Naive thymus-derived CD4-positive, alpha-beta T cell (primary cell): ENCODE measurements at regions of chr17 and their contacts with region 1.

Region 1: GRCh38 chr17:7014261-7014994 is 2.0 kb downstream of the RNASEK start:
- DNase-seq: peak; percentile 96 to 98 (median 97)
- ATAC-seq: peak; percentile 89
- H3K4me3 ChIP-seq: peak overlapping the region; percentile 97
- H3K4me3 Mint-ChIP-seq: peak overlapping the region; percentile 85 to 99 (median 97)
- H3K27ac ChIP-seq: peak overlapping the region; percentile 99
- H3K27ac Mint-ChIP-seq: peak overlapping the region; percentile 97 to 100 (median 100)
- H3K4me1 ChIP-seq: peaks cover 31 to 52% of the 10 kb centered on the region in 2 donors
- H3K4me1 Mint-ChIP-seq: peaks cover 30 to 81% (median 63%) of the 10 kb centered on the region in 7 donors
- H3K27me3 ChIP-seq: no peaks in the 10 kb centered on the region
- H3K27me3 Mint-ChIP-seq: no peaks in the 10 kb centered on the region

Region 2: DNA sequence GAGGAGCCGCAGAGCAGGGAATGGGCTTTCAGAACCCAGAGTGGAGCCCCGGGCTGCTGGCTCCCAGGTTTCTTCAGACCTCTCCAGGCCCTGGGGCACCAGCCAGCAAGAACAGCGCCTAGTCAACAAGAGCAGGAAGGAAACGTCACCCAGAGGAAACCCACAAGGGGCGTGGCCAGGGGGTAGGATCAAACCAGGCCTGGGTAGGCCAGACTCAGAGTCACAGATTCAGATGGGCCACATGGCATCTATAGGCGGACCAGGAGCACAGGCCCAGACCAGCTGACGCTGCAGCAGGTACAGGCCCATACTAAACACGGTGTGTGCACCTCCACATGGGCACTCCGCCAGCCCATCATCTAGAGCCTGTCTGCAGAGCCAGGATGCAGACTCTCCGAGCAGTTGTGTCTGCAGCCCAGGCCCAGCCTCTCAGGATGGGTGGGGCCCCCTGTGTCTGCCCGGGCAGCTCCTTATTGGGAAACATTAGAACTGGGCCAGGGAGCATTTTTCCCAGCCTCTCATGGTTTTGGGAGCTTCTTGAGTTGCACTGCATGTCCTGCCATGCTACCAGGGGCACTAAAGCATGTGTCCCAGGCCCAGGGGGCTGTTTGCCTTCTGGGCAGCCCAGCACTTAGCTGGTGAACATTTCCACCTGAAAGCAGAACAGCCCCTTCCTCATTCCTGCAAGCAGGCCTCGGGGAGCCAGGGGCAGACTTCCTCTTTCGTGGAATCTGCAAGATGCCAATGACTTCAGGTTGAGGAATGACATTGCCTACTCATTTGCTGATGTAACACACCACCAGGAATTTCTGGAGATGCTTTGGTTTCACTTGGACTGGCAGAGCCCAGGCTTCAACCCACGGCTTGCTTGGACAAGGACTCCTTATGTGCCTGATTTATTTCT is 1429.8 kb before region 1 on chr17 and contains the start of gene NLRP1:
- CTCF ChIA-PET with region 1: no interaction called
- POLR2A ChIA-PET with region 1: interaction called, 3 read pairs
- intact Hi-C with region 1: loop called in 1 of 2 experiments (anchors 5 kb)
- DNase-seq: peak; percentile 78 to 97 (median 95)
- ATAC-seq: peak; percentile 96
- H3K4me3 ChIP-seq: peak within 1 kb of the TSS; percentile 97
- H3K4me3 Mint-ChIP-seq: peak within 1 kb of the TSS; percentile 94 to 100 (median 98)
- H3K27ac ChIP-seq: peak within 1 kb of the TSS; percentile 94
- H3K27ac Mint-ChIP-seq: peak within 1 kb of the TSS; percentile 90 to 100 (median 99)
- H3K4me1 ChIP-seq: peaks cover 44 to 67% of the 10 kb centered on the region in 2 donors
- H3K4me1 Mint-ChIP-seq: peaks cover 43 to 74% (median 63%) of the 10 kb centered on the region in 7 donors
- H3K27me3 ChIP-seq: no peaks in the 10 kb centered on the region
- H3K27me3 Mint-ChIP-seq: peaks cover 0 to 12% (median 0%) of the 10 kb centered on the region in 5 donors
- total RNA-seq, gene NLRP1: 86.6 to 360 (median 259) TPM

Region 3: GRCh38 chr17:6753006-6753445 is 261.4 kb before region 1 on chr17:
- CTCF ChIA-PET with region 1: no interaction called
- POLR2A ChIA-PET with region 1: no interaction called
- intact Hi-C with region 1: loop called (anchors 5 to 10 kb)
- DNase-seq: peak in 6 of 9 donors; percentile 4 to 53 (median 36)
- ATAC-seq: no peak
- H3K4me3 ChIP-seq: no peak overlapping the region
- H3K4me3 Mint-ChIP-seq: peak overlapping the region; percentile 13 to 66 (median 44)
- H3K27ac ChIP-seq: peak overlapping the region; percentile 26
- H3K27ac Mint-ChIP-seq: peak overlapping the region; percentile 24 to 100 (median 86)
- H3K4me1 ChIP-seq: peaks cover 26 to 30% of the 10 kb centered on the region in 2 donors
- H3K4me1 Mint-ChIP-seq: peaks cover 37 to 60% (median 48%) of the 10 kb centered on the region in 7 donors
- H3K27me3 ChIP-seq: no peaks in the 10 kb centered on the region
- H3K27me3 Mint-ChIP-seq: peaks cover 0 to 18% (median 0%) of the 10 kb centered on the region in 5 donors

Region 4: DNA sequence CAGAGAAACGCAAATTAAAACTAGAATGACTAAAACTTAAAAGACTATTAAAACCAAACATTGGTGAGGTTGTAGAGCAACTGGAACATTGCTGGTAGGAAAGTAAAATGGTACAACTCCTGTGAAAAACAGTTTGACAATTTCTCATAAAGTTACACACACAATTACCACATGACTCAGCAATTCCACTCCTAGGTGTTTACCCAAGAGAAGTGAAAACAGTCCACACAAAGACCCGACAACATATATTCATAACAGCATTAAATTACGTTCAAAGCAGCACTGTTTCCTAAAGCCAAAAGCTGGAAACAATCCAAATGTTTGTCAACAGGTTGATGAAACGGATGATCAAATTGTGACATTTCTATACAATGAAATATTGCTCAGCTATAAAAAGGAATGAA is 45.1 kb before region 1 on chr17:
- CTCF ChIA-PET with region 1: no interaction called
- POLR2A ChIA-PET with region 1: no interaction called
- intact Hi-C with region 1: no loop called
- DNase-seq: no peak
- ATAC-seq: no peak
- H3K4me3 ChIP-seq: no peak overlapping the region
- H3K4me3 Mint-ChIP-seq: no peak overlapping the region
- H3K27ac ChIP-seq: no peak overlapping the region
- H3K27ac Mint-ChIP-seq: peak overlapping the region in 1 of 9 donors; percentile 36
- H3K4me1 ChIP-seq: no peaks in the 10 kb centered on the region
- H3K4me1 Mint-ChIP-seq: peaks cover 0 to 5% (median 0%) of the 10 kb centered on the region in 7 donors
- H3K27me3 ChIP-seq: no peaks in the 10 kb centered on the region
- H3K27me3 Mint-ChIP-seq: peaks cover 0 to 8% (median 0%) of the 10 kb centered on the region in 5 donors

Region 5: DNA sequence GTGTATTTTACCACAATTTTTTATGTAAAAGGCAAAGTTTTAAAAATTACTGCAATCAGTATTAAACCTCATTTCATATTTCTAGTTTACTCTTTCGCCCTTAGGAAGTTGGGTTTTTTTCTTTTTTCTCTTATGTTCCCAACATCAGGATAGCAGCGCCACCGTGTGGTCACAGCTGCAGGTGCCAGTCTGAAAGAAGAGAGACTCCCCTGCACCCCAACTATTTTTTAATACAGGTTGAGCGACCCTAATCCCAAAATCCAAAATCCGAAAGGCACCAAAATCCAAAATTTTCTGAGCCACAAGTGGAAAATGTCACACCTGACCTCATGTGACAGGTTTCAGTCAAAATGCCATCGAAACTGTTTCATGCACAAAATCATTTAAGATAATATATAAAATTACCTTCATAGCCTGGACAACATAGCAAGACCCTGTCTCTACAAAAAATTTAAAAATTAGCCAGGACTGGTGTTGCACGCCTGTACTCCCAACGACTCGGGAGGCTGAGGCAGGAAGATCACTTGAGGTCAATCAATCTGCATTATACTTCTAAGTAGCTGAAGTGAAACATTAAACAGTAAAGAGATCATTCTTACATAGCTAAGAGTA is 121.9 kb after region 1 on chr17:
- CTCF ChIA-PET with region 1: interaction called, 3 read pairs
- POLR2A ChIA-PET with region 1: interaction called, 4 read pairs
- intact Hi-C with region 1: loop called in 1 of 2 experiments (anchors 1 kb)
- DNase-seq: peak; percentile 53 to 74 (median 71)
- ATAC-seq: peak; percentile 24
- H3K4me3 ChIP-seq: no peak overlapping the region
- H3K4me3 Mint-ChIP-seq: peak overlapping the region in 4 of 10 donors; percentile 32 to 53 (median 44)
- H3K27ac ChIP-seq: no peak overlapping the region
- H3K27ac Mint-ChIP-seq: peak overlapping the region in 4 of 9 donors; percentile 8 to 48 (median 28)
- H3K4me1 ChIP-seq: peaks cover 6 to 20% of the 10 kb centered on the region in 2 donors
- H3K4me1 Mint-ChIP-seq: peaks cover 13 to 34% (median 23%) of the 10 kb centered on the region in 7 donors
- H3K27me3 ChIP-seq: no peaks in the 10 kb centered on the region
- H3K27me3 Mint-ChIP-seq: peaks cover 0 to 24% (median 6%) of the 10 kb centered on the region in 5 donors

Region 6: DNA sequence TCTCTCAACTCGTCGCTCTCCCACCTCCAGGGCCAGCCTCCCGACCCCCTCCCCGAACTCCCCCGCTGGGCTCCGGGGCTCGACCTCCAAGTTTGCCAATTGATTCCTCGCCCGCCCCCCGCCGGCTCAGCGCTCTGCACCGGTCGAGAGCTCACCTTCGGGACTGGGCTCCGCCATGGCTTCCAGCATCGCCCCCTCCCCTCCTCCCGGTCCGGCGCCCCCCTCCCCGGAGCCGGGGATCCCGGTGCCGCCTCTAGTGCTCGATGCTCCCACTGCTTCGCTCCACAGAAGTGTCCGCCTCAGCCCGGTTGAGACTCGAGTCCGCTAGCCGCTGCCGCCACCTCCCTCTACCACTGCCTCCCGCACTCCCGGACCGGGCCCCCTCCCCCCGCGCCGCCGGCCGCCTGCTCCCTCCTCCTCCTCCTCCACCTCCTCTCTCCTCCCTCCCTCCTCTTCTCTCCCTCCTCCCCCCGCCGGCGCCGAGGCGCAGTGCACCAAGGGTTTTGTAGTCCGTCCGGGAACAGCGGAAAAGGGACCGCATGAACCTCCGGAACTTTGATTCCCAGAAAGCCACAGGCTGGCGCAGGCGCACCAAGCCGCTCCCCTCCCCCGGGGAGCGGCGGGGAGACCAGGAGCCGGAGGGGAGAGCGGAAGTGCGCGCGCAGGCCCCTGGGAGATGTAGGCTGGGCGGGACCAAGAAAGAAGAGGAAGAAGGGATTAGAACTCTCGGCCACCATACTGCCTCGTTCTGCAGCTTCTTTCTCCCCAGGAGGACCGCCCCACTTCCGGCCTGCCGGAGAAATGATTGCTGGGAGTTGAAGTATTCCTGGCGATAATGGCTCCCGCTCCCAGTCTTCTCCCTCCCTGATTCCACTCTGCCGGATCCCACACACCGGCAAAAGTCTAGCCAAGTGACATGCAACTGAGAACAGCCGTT is 224.9 kb after region 1 on chr17 and contains the start of gene PHF23:
- CTCF ChIA-PET with region 1: no interaction called
- POLR2A ChIA-PET with region 1: interaction called, 3 read pairs
- intact Hi-C with region 1: loop called in 1 of 2 experiments (anchors 1 kb)
- DNase-seq: peak; percentile 91 to 98 (median 97)
- ATAC-seq: peak; percentile 78
- H3K4me3 ChIP-seq: peak within 1 kb of the TSS; percentile 76
- H3K4me3 Mint-ChIP-seq: peak within 1 kb of the TSS; percentile 88 to 98 (median 95)
- H3K27ac ChIP-seq: peak within 1 kb of the TSS; percentile 92
- H3K27ac Mint-ChIP-seq: peak within 1 kb of the TSS; percentile 55 to 100 (median 95)
- H3K4me1 ChIP-seq: peaks cover 32 to 44% of the 10 kb centered on the region in 2 donors
- H3K4me1 Mint-ChIP-seq: peaks cover 38 to 67% (median 60%) of the 10 kb centered on the region in 7 donors
- H3K27me3 ChIP-seq: no peaks in the 10 kb centered on the region
- H3K27me3 Mint-ChIP-seq: peaks cover 0 to 7% (median 0%) of the 10 kb centered on the region in 5 donors
- total RNA-seq, gene PHF23: 12.3 to 58.7 (median 55.2) TPM

Region 7: GRCh38 chr17:7614422-7615264 is 600.2 kb after region 1 on chr17 and contains the start of gene FXR2:
- CTCF ChIA-PET with region 1: no interaction called
- POLR2A ChIA-PET with region 1: no interaction called
- intact Hi-C with region 1: no loop called
- DNase-seq: peak; percentile 96 to 100 (median 99)
- ATAC-seq: peak; percentile 93
- H3K4me3 ChIP-seq: peak within 1 kb of the TSS; percentile 86
- H3K4me3 Mint-ChIP-seq: peak within 1 kb of the TSS; percentile 85 to 97 (median 92)
- H3K27ac ChIP-seq: peak within 1 kb of the TSS; percentile 81
- H3K27ac Mint-ChIP-seq: peak within 1 kb of the TSS; percentile 89 to 99 (median 97)
- H3K4me1 ChIP-seq: peaks cover 16 to 27% of the 10 kb centered on the region in 2 donors
- H3K4me1 Mint-ChIP-seq: peaks cover 29 to 47% (median 40%) of the 10 kb centered on the region in 7 donors
- H3K27me3 ChIP-seq: no peaks in the 10 kb centered on the region
- H3K27me3 Mint-ChIP-seq: peaks cover 0 to 6% (median 0%) of the 10 kb centered on the region in 5 donors
- total RNA-seq, gene FXR2: 24.6 to 46.9 (median 34.0) TPM

Region 8: GRCh38 chr17:8435245-8436168 is 1421.1 kb after region 1 on chr17 and contains the start of gene NDEL1:
- CTCF ChIA-PET with region 1: no interaction called
- POLR2A ChIA-PET with region 1: no interaction called
- intact Hi-C with region 1: loop called in 1 of 2 experiments (anchors 5 kb)
- DNase-seq: peak; percentile 97 to 99 (median 99)
- ATAC-seq: peak; percentile 95
- H3K4me3 ChIP-seq: peak within 1 kb of the TSS; percentile 81
- H3K4me3 Mint-ChIP-seq: peak within 1 kb of the TSS; percentile 94 to 99 (median 96)
- H3K27ac ChIP-seq: peak within 1 kb of the TSS; percentile 100
- H3K27ac Mint-ChIP-seq: peak within 1 kb of the TSS; percentile 96 to 100 (median 98)
- H3K4me1 ChIP-seq: peaks cover 10 to 22% of the 10 kb centered on the region in 2 donors
- H3K4me1 Mint-ChIP-seq: peaks cover 9 to 46% (median 37%) of the 10 kb centered on the region in 7 donors
- H3K27me3 ChIP-seq: no peaks in the 10 kb centered on the region
- H3K27me3 Mint-ChIP-seq: no peaks in the 10 kb centered on the region
- total RNA-seq, gene NDEL1: 72.6 to 274 (median 116) TPM